Ascending aorta (tissue), 2 donors: ENCODE measurements at regions of chr4 and their contacts with region 1.

Region 1: GRCh38 chr4:118954246-118954645 is 65.6 kb downstream of the SYNPO2 start:
- DNase-seq: no peak
- H3K4me3 ChIP-seq: peak overlapping the region in 1 of 2 donors; percentile 20
- H3K27ac ChIP-seq: peak overlapping the region; percentile 79
- H3K4me1 ChIP-seq: peaks cover 14 to 39% of the 10 kb centered on the region in 2 donors
- H3K27me3 ChIP-seq: no peaks in the 10 kb centered on the region
- CTCF ChIP-seq: peak in 1 of 3 experiments; percentile 37

Region 2: GRCh38 chr4:118894034-118894433 is 60.2 kb before region 1 on chr4:
- intact Hi-C with region 1: loop called (anchors 5 kb)
- DNase-seq: no peak
- H3K4me3 ChIP-seq: peak overlapping the region; percentile 11 to 68
- H3K27ac ChIP-seq: peak overlapping the region; percentile 70 to 89
- H3K4me1 ChIP-seq: peaks cover 0 to 20% of the 10 kb centered on the region in 2 donors
- H3K27me3 ChIP-seq: no peaks in the 10 kb centered on the region
- CTCF ChIP-seq: no peak

Region 3: DNA sequence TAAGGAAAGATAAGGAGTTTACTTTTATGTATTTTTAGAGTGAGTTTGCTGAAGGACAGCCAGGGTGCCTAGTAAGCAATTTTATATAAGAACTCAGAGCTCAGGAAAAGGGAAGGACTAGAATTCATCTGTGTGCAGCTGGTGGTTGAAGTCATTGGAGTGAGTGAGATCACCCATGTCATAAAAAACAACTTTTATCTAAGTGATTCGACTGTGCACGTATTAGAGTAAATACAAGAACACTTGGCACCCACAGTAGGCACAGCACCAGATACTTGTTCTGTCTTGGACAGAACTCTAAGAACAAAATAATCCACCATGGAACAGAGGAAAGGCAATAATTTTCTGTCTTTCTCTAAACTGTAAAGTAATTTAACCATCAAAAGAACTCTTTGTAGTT is 34.0 kb before region 1 on chr4:
- intact Hi-C with region 1: loop called (anchors 5 kb)
- DNase-seq: peak in 1 of 2 donors; percentile 75
- H3K4me3 ChIP-seq: peak overlapping the region in 1 of 2 donors; percentile 11
- H3K27ac ChIP-seq: peak overlapping the region; percentile 72 to 78
- H3K4me1 ChIP-seq: peaks cover 11 to 70% of the 10 kb centered on the region in 2 donors
- H3K27me3 ChIP-seq: no peaks in the 10 kb centered on the region
- CTCF ChIP-seq: no peak